ENCODE measurements at regions of chr3 and their contacts with region 1.

Region 1: GRCh38 chr3:59072681-59073080 is 22.9 kb upstream of the CFAP20DC start:
- DNase-seq: no peak
- ATAC-seq: no peak
- H3K4me3 ChIP-seq: no peak overlapping the region
- H3K4me3 Mint-ChIP-seq: no peak overlapping the region
- H3K27ac ChIP-seq: no peak overlapping the region
- H3K27ac Mint-ChIP-seq: no peak overlapping the region
- H3K4me1 ChIP-seq: peaks cover 0 to 4% of the 10 kb centered on the region in 2 experiments
- H3K4me1 Mint-ChIP-seq: no peaks in the 10 kb centered on the region
- H3K27me3 ChIP-seq: no peaks in the 10 kb centered on the region
- H3K27me3 Mint-ChIP-seq: peaks cover 17 to 54% of the 10 kb centered on the region in 2 donors

Region 2: GRCh38 chr3:59885101-59885500 is 812.4 kb after region 1 on chr3:
- CTCF ChIA-PET with region 1: no interaction called
- POLR2A ChIA-PET with region 1: interaction called in 1 of 2 experiments, 16 read pairs
- DNase-seq: no peak
- ATAC-seq: peak in 3 of 4 experiments; percentile 16 to 41 (median 32)
- H3K4me3 ChIP-seq: no peak overlapping the region
- H3K4me3 Mint-ChIP-seq: peak overlapping the region in 1 of 3 donors; percentile 7
- H3K27ac ChIP-seq: no peak overlapping the region
- H3K27ac Mint-ChIP-seq: peak overlapping the region; percentile 53 to 62
- H3K4me1 ChIP-seq: peaks cover 15 to 38% of the 10 kb centered on the region in 2 experiments
- H3K4me1 Mint-ChIP-seq: peaks cover 46 to 84% (median 81%) of the 10 kb centered on the region in 3 donors
- H3K27me3 ChIP-seq: no peaks in the 10 kb centered on the region
- H3K27me3 Mint-ChIP-seq: no peaks in the 10 kb centered on the region